A549 (cell line): ENCODE measurements at regions of chr17 and their contacts with region 1.

Region 1: DNA sequence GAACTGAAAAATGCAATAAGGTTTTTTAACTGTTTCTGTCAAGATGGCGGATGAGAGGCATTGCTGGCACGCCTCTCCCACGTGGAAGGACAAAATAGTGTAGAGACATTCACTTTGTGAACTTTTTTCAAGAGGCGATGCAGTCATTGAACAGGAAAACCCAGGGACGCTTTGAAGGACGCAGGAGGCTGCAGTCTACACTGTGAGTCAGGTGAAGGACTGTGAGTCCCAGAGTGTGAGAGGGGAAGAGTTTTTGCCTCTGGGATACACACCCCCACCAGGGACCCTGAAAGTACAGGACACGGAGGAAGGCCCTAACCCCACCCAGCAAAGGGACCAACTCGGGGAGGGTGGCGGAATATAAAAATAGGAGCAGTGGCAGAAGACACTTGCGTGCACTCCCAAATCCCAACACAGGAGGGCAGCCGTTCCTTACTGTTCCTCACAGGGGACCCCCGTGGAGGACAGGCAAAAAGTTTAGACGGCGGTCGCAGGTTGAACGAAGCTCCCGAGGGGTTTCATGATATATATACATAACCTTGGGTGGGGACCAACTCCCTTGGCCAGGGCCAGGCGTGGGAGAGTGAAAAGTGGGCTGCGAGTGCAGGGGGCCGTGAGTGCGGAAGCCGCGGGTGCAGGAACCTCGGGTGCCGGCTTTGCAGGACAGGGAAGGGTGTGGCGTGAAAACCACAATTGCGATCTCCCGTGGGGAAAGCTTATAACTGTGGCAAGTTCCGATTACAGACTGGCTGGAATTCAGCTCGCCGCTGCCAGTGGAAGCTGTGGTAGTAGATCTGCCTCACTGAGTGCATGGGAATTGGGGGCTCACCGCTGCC is 82.0 kb upstream of the ALOX12 start:
- DNase-seq: peak; percentile 57 to 74
- ATAC-seq: peak; percentile 70 to 82
- H3K4me3 ChIP-seq: peak overlapping the region; percentile 36; the same call in 2 of the 3 replicates
- H3K27ac ChIP-seq: peak overlapping the region; percentile 9 to 50; a peak in 3 of 6 replicates
- H3K4me1 ChIP-seq: peaks cover 5% of the 10 kb centered on the region; the same call in 2 of the 3 replicates
- CTCF ChIP-seq: peak; percentile 84
- EP300 ChIP-seq: no peak
- POLR2A ChIP-seq: no peak
- RAD21 ChIP-seq: peak; percentile 88 to 89

Region 2: GRCh38 chr17:6894206-6894528 is 19.7 kb before region 1 on chr17:
- CTCF ChIA-PET with region 1: interaction called, 20 read pairs
- POLR2A ChIA-PET with region 1: no interaction called
- DNase-seq: no peak
- ATAC-seq: no peak
- H3K4me3 ChIP-seq: no peak overlapping the region
- H3K27ac ChIP-seq: no peak overlapping the region
- H3K4me1 ChIP-seq: no peaks in the 10 kb centered on the region
- CTCF ChIP-seq: no peak
- EP300 ChIP-seq: no peak
- POLR2A ChIP-seq: no peak
- RAD21 ChIP-seq: peak in 1 of 2 experiments; percentile 34; a peak in 2 of 5 replicates

Region 3: DNA sequence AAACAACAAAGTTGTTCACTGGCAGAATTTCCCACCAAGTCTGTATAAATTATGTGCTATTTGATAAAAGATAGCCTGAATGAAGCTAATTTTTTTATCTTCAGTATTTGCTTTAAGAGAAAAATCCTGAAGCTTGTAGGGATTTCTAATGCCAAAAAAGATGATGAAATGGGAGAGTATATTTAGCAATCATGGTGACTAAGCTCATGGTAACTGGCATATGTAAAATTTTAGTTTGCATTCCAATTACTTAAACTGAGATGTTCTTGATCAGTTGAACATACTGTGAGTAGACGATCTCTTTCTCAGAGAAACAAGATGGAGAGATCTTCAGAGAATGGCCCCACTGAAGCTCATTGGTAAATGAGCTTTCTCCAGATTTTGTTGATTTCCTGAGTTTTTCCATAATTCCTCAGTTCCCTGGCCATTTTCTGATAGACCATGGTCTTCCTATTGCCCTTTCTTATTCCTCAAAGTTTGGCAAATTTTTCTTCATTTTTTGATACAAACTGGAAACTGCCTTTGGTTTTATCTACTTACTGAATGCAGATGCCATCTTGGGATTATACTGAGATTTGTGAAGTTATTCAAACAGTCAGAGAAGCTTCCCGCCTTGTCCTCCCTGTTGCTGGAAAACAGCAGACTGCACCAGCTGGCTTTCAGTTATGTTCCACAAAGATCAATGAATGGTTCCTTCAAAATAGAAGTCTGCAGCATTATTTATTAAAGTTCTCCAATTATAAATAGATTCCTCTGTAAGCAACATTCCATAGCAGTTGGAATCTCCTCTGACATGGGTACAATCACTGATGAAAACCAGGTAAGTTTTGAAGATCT is 13.7 kb after region 1 on chr17:
- CTCF ChIA-PET with region 1: interaction called, 26 read pairs
- POLR2A ChIA-PET with region 1: no interaction called
- DNase-seq: no peak
- ATAC-seq: no peak
- H3K4me3 ChIP-seq: no peak overlapping the region
- H3K27ac ChIP-seq: no peak overlapping the region
- H3K4me1 ChIP-seq: peaks cover 7% of the 10 kb centered on the region; the same call in 2 of the 3 replicates
- CTCF ChIP-seq: no peak
- EP300 ChIP-seq: no peak
- POLR2A ChIP-seq: no peak
- RAD21 ChIP-seq: no peak

Region 4: DNA sequence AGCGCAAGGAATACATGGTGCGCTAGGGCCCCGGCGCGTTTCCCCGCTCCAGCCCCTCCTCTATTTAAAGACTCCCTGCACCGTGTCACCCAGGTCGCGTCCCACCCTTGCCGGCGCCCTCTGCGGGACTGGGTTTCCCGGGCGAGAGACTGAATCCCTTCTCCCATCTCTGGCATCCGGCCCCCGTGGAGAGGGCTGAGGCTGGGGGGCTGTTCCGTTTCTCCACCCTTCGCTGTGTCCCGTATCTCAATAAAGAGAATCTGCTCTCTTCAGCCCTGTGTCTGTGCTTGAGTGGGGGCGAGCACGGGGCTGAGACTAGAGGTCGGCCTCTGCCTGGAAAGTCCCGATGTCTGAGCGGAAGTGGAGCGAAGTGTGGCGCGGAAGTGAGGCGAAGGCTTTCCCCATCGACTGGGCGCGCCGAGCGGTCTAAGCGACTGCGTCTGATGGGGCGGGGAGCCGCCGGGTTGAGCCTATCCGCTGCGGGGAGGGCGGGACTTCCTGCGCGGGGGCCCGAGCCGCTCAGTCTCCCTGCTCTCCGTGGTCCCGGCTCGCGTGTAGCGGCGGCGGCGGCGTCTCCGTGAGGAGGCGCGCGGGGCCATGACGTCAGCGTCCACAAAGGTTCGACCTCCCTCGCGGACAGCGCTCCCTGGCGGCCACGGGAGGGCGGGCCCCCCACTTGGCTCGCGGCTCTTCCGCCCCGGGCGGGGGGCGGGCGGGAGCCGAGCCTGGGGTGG is 100.6 kb after region 1 on chr17:
- CTCF ChIA-PET with region 1: interaction called, 18 read pairs
- POLR2A ChIA-PET with region 1: interaction called, 3 read pairs
- DNase-seq: peak; percentile 96 to 98
- ATAC-seq: peak; percentile 83 to 92
- H3K4me3 ChIP-seq: peak overlapping the region; percentile 81
- H3K27ac ChIP-seq: peak overlapping the region; percentile 90 to 99
- H3K4me1 ChIP-seq: peaks cover 25% of the 10 kb centered on the region
- CTCF ChIP-seq: peak; percentile 87
- EP300 ChIP-seq: no peak
- POLR2A ChIP-seq: peak; percentile 89
- RAD21 ChIP-seq: peak in 1 of 2 experiments; percentile 61; a peak in 3 of 5 replicates